Tibial artery (tissue), 4 donors: ENCODE measurements at regions of chr2 and their contacts with region 1.

Region 1: GRCh38 chr2:68031542-68032160 is 31.2 kb downstream of the C1D start:
- DNase-seq: no peak
- H3K4me3 ChIP-seq: no peak overlapping the region
- H3K27ac ChIP-seq: no peak overlapping the region
- H3K4me1 ChIP-seq: peaks cover 0 to 4% (median 0%) of the 10 kb centered on the region in 4 donors
- H3K27me3 ChIP-seq: no peaks in the 10 kb centered on the region
- CTCF ChIP-seq: peak; percentile 80 to 84

Region 2: DNA sequence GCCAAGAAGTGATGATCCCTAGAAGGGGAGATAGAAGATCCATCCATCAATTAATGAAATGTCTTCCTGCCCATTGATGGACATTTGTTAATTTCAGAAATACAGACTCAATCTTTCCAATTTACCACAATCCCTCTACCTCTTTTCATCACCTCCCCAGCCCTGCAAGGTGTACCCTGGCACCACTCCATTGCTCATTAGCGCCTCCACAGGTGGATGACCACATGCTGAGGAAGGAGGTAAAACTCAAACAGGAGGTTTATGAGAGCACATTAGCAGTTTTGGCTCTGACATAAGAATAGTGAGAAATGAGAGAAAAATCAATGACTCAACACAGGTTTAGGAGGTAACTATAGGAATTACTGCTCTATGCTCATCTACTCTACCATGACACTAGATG is 176.9 kb before region 1 on chr2:
- intact Hi-C with region 1: loop called (anchors 10 kb)
- DNase-seq: no peak
- H3K4me3 ChIP-seq: no peak overlapping the region
- H3K27ac ChIP-seq: no peak overlapping the region
- H3K4me1 ChIP-seq: peaks cover 0 to 14% (median 0%) of the 10 kb centered on the region in 4 donors
- H3K27me3 ChIP-seq: no peaks in the 10 kb centered on the region
- CTCF ChIP-seq: no peak